ENCODE measurements at regions of chr1 and their contacts with region 1.

Region 1: DNA sequence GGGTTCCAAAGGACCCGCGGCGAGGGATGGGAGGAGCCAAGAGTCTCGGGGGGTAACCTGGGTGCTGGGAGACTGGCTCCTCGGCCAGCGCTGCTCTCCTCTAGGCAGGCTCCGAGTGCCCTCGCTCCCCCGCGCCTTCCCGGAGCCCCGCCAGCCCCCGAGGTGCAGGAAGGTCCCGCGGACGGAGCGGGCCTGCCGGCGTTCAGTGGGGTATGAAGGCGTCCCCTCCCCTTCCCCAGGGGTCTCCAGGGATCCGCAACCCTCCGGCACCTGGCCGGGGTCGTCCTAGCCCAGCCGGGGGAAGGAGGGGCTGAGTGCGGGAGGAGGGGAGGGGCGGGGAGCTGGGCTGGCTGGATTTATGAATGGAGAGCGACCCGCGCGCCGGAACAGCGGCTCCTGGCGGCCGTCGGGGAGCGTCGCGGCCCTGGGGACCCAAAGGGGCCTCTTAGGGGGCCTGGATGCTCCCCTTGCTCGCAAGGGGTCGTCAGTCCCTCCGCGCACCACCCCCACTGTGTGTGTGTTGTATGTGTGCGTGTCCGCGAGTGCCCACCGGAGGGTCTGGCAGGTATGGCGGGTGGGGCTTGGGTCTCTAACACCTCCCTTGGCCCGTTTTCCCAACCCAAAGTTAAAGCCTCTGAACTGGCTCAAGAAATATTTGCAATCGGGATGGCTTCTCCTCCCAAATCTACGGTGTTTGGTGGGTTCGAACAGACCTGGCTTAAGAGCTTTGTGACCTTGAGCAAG is 600 bp downstream of the HCRTR1 start:
- H3K4me3 ChIP-seq: peak overlapping the region; percentile 47
- H3K27ac ChIP-seq: no peak overlapping the region; the same call in 1 of the 2 replicates
- H3K4me1 ChIP-seq: no peaks in the 10 kb centered on the region
- CTCF ChIP-seq: peak; percentile 86

Region 2: DNA sequence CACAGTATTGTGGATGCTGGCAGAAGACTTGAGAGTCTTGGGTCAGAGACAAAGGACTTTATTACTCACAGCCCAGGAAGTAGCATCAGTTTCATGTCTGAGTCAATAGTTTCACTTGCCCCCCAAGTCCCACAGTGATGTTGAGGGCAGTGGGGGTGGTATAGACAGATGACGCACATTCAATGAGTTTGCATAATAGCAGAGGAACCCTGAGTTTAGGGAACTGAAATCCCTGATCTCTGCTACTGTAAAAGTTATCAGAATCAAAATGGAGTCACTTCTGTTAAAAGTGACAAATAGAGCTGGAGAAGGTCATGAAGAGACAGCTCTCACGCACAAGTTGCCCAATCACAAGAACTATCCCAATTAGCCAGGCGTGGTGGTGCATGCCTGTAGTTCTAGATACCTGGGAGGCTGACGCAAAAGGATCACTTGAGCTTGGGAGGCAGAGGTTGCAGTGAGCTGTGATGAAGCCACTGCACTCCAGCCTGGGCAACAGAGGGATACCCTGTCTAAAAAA is 12.1 kb before region 1 on chr1:
- CTCF ChIA-PET with region 1: interaction called, 47 read pairs
- POLR2A ChIA-PET with region 1: no interaction called
- H3K4me3 ChIP-seq: no peak overlapping the region
- H3K27ac ChIP-seq: no peak overlapping the region
- H3K4me1 ChIP-seq: no peaks in the 10 kb centered on the region
- CTCF ChIP-seq: no peak

Region 3: GRCh38 chr1:31633053-31633452 is 15.0 kb after region 1 on chr1:
- CTCF ChIA-PET with region 1: interaction called, 18 read pairs
- POLR2A ChIA-PET with region 1: interaction called, 3 read pairs
- H3K4me3 ChIP-seq: no peak overlapping the region
- H3K27ac ChIP-seq: no peak overlapping the region
- H3K4me1 ChIP-seq: no peaks in the 10 kb centered on the region
- CTCF ChIP-seq: peak; percentile 69; the same call in 1 of the 2 replicates

Region 4: DNA sequence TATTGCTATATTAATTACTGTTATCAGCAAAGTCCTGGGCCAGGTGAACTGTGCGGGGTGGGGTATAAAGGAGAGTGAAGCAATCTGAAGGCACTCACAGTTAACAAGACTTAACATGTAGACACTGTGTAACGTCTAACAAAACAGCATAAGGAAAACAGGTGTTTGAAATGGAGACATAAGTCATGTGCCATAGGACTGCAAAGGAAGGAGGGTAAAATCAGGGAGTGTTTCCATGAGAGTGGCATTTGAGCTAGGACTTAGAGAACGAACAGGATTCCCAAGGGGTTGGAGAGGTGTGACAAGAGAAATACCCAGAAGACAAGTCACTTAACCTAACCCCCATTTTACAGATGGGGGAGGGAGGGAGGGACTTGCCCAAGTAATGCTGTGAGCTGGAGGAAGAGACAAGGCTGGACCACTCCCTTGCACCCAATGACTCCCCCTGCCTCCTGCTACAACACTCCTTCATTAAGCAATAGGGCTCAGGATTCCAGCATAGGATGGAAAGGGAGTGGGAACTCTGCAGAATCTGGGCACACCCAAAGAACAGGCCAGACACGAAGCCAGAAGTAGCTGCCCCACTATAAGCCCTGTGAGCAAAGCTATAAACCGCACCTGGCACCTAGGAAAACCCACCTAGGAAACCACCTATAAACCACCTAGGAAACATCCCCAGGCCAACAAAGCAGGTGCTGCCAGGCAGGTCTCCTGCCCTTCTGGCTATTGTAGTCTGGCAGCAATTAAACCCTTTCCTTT is 20.0 kb after region 1 on chr1:
- CTCF ChIA-PET with region 1: interaction called, 18 read pairs
- POLR2A ChIA-PET with region 1: interaction called, 3 read pairs
- H3K4me3 ChIP-seq: no peak overlapping the region
- H3K27ac ChIP-seq: no peak overlapping the region
- H3K4me1 ChIP-seq: peaks cover 5% of the 10 kb centered on the region; the same call in 1 of the 2 replicates
- CTCF ChIP-seq: no peak

Measured in HEK293 (cell line).